ENCODE measurements at regions of chr17 and their contacts with region 1.

Region 1: DNA sequence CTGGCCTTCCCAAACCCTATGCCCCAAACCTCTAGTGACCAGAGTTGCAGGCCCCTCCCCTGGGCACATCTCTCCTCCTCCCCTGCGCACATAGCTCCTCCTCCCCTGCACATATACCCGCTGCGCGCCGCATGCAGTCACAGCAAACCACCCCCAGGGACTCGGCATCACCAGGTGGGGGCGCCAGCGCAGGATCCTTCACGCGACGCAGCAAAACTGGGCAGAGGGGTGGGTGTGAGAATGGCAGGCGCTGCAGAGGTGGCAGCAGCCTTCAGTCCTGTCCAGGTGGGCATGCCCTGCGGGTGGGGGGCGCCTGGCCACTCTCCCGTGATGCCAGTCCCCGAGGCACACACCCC is 5.6 kb downstream of the CORO6 start:
- DNase-seq: peak; percentile 86
- H3K4me3 Mint-ChIP-seq: peak overlapping the region; percentile 81
- H3K27ac Mint-ChIP-seq: peak overlapping the region; percentile 66
- H3K4me1 Mint-ChIP-seq: peaks cover 40% of the 10 kb centered on the region
- H3K27me3 Mint-ChIP-seq: peaks cover 8% of the 10 kb centered on the region

Region 2: GRCh38 chr17:29389982-29390850 is 226.9 kb before region 1 on chr17 and contains the start of gene TAOK1:
- intact Hi-C with region 1: loop called (anchors 1 kb)
- DNase-seq: peak; percentile 97
- H3K4me3 Mint-ChIP-seq: peak within 1 kb of the TSS; percentile 98
- H3K27ac Mint-ChIP-seq: peak within 1 kb of the TSS; percentile 95
- H3K4me1 Mint-ChIP-seq: peaks cover 43% of the 10 kb centered on the region
- H3K27me3 Mint-ChIP-seq: no peaks in the 10 kb centered on the region
- total RNA-seq, gene TAOK1: 45.9 and 46.9 TPM in 2 replicates

Region 3: GRCh38 chr17:29579866-29580771 is 37.0 kb before region 1 on chr17:
- intact Hi-C with region 1: loop called (anchors 1 kb)
- DNase-seq: peak; percentile 79
- H3K4me3 Mint-ChIP-seq: no peak overlapping the region
- H3K27ac Mint-ChIP-seq: peak overlapping the region; percentile 90
- H3K4me1 Mint-ChIP-seq: peaks cover 23% of the 10 kb centered on the region
- H3K27me3 Mint-ChIP-seq: no peaks in the 10 kb centered on the region

Region 4: DNA sequence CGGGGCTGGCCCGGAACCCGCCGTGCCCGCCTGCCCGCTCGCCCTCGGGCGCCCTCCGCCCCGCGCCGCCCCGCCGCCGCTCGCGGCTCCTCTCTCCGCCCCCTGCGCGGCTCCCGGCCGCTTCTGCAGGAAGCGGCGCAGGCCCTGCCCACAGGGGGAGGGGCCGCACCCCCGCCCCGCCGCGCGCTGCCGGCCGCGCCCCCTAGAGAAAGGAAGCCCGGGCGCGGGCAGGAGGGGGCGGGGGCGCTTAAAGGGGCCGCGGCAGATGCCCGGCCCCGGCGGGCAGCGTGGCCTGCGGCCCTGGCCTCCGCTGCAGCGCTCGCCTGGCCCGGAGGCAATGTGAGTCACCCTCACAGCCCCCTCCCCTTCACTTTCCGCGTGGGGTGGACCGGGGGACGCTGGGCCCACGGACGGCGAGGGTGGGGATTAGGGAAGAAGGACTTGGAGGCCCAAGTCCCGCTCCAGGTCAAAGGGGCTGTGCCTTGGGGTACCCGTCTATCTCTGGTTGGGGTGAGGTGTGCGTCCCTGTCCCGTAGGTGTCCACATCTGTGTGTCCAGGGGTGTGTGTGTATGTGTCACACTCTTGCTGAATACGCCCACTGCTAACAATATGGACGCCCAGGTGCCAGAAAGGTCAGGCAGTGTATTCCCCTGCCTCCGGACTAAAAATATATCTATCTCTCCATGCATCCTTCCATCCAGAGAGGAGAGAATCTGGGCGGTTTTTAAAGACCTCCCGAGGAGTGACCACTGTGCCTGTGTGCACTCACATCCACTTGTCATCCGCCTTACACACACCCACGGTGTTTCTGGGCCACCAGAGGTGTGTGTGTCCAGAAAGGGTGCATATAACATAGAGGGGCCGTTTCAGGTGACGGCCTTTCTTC is 27.3 kb before region 1 on chr17 and contains the start of gene GIT1:
- intact Hi-C with region 1: loop called (anchors 1 kb)
- DNase-seq: peak; percentile 84
- H3K4me3 Mint-ChIP-seq: peak within 1 kb of the TSS; percentile 96
- H3K27ac Mint-ChIP-seq: peak within 1 kb of the TSS; percentile 87
- H3K4me1 Mint-ChIP-seq: peaks cover 63% of the 10 kb centered on the region
- H3K27me3 Mint-ChIP-seq: no peaks in the 10 kb centered on the region
- total RNA-seq, gene GIT1: 81.0 and 87.5 TPM in 2 replicates

Region 5: DNA sequence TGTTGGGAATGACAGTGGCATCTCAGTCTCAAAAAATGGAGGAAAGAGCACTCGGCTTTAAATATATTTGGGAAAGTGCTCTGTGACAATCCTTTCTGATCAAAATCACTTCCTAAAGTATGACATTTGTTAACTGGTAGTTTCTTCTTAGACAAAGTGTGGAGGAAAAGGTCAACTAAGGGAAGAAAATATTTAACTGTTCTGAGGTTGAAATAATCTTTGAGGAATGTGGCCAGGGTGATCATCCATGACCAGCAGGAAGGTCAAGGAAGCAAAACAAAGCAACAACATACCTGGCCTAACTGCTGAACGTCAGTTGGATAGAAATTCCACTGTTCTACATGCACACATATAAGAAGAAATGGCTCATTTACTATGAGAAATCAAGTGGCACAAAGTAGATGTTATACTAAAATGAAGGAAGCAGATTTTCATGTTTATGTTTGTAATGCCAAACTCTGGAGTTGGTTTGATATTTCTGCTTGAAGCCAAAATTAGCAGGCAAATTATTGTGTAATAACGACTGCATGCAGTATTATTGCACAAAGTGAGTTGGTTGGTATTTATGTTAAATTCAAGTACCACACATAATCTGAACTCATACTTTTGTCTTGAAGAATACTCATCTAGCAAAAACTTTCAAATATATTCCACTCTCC is 92.9 kb after region 1 on chr17:
- intact Hi-C with region 1: loop called (anchors 1 kb)
- DNase-seq: no peak
- H3K4me3 Mint-ChIP-seq: no peak overlapping the region
- H3K27ac Mint-ChIP-seq: no peak overlapping the region
- H3K4me1 Mint-ChIP-seq: peaks cover 48% of the 10 kb centered on the region
- H3K27me3 Mint-ChIP-seq: no peaks in the 10 kb centered on the region

Region 6: GRCh38 chr17:29777663-29778062 is 160.6 kb after region 1 on chr17:
- intact Hi-C with region 1: loop called (anchors 1 kb)
- DNase-seq: no peak
- H3K4me3 Mint-ChIP-seq: no peak overlapping the region
- H3K27ac Mint-ChIP-seq: no peak overlapping the region
- H3K4me1 Mint-ChIP-seq: peaks cover 16% of the 10 kb centered on the region
- H3K27me3 Mint-ChIP-seq: no peaks in the 10 kb centered on the region

Measured in activated T-helper 1 cell treated with anti-CD3 and anti-CD28 coated beads, Interleukin-12 subunit alpha, Interleukin-12 subunit beta, Interleukin-2, Interleukin-4 antibody, amounts not matched to agents 30 ng/mL and 10 ng/mL and 1 ng/mL, durations not matched to agents 14 hours and 24 hours and 36 hours (primary cell).